Endothelial cell of umbilical vein (primary cell): ENCODE measurements at regions of chr11 and their contacts with region 1.

Region 1: DNA sequence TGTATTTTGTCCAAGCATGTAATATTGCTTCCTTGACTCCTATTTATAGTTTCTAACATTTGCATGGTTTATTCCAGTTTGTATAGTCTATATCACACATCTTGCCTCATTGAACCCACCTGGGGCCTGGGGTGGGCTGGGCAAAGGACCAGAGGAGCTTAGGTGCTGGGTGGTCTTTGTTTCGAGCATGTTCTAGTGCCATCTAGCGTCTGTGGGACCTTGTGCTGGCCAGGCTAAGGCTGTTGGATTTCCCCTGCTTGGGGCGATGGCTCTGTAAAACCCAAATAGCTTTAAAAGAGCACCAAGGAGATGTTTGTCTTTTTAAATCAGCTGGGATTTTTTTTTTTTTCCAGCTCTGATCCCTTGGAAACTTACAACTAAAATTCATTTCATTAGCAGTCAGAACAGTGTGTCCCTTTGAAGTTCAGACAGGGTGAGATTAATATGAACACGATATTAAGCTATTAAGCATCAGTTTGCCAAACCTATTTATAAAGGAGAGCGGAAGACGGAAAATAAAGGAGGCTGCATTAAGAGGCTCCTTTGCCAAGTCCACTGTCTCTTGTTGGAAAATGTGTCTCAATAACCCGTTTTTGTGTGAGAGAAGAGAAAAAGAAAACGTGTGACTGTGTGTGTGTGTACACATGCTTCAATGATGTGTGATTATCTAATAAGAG is 157.4 kb downstream of the COMMD9 start:
- DNase-seq: peak; percentile 71
- H3K4me3 ChIP-seq: no peak overlapping the region
- H3K27ac ChIP-seq: no peak overlapping the region
- H3K4me1 ChIP-seq: peaks cover 9% of the 10 kb centered on the region
- H3K27me3 ChIP-seq: no peaks in the 10 kb centered on the region
- CTCF ChIP-seq: peak; percentile 65 to 80
- POLR2A ChIP-seq: no peak

Region 2: DNA sequence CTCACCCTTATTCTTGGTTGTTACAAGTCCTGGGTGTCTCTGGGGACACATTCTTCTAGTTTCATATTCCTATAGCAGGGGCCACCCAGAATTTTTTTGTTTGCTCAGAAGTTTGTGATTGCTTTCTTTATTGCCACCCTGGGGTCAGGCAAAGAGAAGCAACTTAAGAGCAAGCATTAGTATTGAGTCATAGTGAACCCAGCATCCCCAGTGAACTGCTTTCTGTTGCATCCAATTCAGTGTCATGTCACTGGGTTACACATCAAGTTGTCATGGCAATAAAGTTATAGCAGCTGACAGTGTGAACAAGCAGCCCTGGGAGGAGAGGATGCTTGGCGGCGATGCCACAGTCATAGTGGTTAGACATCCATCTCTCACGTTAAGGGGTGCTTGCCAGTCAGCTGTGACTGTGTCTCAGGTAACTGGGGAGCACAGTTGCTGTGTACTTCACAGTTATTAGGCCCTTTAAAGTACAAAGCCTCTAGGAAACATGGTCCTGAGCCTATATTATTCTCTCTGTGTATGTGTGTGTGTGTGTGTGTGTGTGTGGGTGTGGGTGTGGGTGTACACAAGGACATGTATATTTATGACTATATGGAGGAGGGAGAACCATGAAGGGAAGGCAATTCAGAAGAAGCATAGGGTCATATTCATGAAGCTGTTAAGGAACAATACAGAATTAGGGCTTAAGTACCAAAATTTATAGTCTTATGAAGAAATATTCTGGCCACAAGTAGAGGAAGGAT is 416.8 kb before region 1 on chr11:
- CTCF ChIA-PET with region 1: interaction called, 3 read pairs
- POLR2A ChIA-PET with region 1: no interaction called
- dilution Hi-C with region 1: no loop called
- intact Hi-C with region 1: loop called (anchors 10 kb)
- DNase-seq: no peak
- H3K4me3 ChIP-seq: no peak overlapping the region
- H3K27ac ChIP-seq: no peak overlapping the region
- H3K4me1 ChIP-seq: no peaks in the 10 kb centered on the region
- H3K27me3 ChIP-seq: no peaks in the 10 kb centered on the region
- CTCF ChIP-seq: no peak
- POLR2A ChIP-seq: no peak

Region 3: GRCh38 chr11:36041988-36042611 is 89.8 kb before region 1 on chr11:
- CTCF ChIA-PET with region 1: interaction called, 49 read pairs
- POLR2A ChIA-PET with region 1: no interaction called
- dilution Hi-C with region 1: no loop called
- intact Hi-C with region 1: loop called (anchors 1 kb)
- DNase-seq: peak; percentile 29
- H3K4me3 ChIP-seq: no peak overlapping the region
- H3K27ac ChIP-seq: no peak overlapping the region
- H3K4me1 ChIP-seq: no peaks in the 10 kb centered on the region
- H3K27me3 ChIP-seq: no peaks in the 10 kb centered on the region
- CTCF ChIP-seq: peak; percentile 44 to 45
- POLR2A ChIP-seq: no peak

Region 4: DNA sequence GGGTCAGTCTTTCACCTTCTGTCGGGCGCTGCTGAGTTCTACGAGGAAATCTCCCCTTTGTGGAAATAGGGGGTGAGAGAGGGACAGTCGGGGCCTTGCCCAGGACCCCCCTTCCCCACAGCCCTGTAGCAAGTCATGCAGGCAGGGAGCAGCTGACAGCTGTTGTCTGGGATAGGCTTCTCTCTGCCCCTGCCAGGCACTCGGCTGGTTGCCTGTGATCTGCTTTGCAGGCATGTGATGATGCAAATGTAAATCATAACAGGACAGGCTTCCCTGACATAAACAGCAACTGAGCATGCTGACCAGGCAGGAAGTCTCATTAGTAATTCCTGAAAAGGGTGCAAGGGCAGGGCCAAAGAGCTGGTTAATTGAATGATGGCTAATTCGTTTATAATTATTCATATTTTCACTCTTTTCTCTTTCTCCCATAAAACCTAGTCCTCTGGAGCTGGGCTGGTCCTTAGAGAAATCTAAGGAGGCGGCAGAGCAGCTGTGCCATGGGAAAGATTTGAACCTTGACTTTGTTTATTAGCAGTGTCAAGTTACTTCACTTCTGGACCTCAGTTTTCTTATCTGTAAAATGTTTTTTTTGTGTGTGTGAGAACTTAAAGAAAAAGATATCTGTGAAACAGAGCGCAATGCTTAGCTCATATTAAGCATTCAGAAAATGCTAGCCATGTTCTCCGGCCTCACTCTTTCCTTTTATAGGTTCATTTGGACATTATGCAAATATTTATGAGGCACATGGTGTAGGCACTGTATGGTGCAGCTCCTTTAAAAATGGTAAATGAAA is 58.3 kb before region 1 on chr11:
- CTCF ChIA-PET with region 1: interaction called, 21 read pairs
- POLR2A ChIA-PET with region 1: no interaction called
- dilution Hi-C with region 1: no loop called
- intact Hi-C with region 1: no loop called
- DNase-seq: peak; percentile 90
- H3K4me3 ChIP-seq: no peak overlapping the region
- H3K27ac ChIP-seq: peak overlapping the region; percentile 62
- H3K4me1 ChIP-seq: peaks cover 32% of the 10 kb centered on the region
- H3K27me3 ChIP-seq: no peaks in the 10 kb centered on the region
- CTCF ChIP-seq: no peak
- POLR2A ChIP-seq: no peak

Region 5: DNA sequence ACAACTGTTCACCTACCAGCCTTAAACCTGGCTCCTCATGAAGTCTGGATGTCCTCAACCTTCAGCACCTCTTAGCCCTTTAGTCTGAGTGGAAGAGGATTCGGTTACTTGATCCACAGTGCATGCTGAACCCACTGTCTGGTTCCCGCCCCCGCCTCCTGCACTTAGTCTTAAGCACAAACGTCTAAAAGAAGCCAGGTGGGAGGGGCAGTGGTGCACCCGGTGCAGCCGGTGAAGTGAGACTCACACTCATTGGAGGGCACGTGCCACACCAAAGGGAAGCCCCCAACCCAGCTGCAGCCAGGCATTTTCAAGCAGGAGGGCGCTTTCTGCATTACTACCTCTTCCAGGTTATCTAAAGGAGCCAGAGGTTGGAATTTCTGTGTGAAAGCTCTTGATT is 10.6 kb after region 1 on chr11:
- CTCF ChIA-PET with region 1: interaction called, 13 read pairs
- POLR2A ChIA-PET with region 1: no interaction called
- dilution Hi-C with region 1: no loop called
- intact Hi-C with region 1: no loop called
- DNase-seq: no peak
- H3K4me3 ChIP-seq: no peak overlapping the region
- H3K27ac ChIP-seq: no peak overlapping the region
- H3K4me1 ChIP-seq: no peaks in the 10 kb centered on the region
- H3K27me3 ChIP-seq: no peaks in the 10 kb centered on the region
- CTCF ChIP-seq: no peak
- POLR2A ChIP-seq: no peak

Region 6: DNA sequence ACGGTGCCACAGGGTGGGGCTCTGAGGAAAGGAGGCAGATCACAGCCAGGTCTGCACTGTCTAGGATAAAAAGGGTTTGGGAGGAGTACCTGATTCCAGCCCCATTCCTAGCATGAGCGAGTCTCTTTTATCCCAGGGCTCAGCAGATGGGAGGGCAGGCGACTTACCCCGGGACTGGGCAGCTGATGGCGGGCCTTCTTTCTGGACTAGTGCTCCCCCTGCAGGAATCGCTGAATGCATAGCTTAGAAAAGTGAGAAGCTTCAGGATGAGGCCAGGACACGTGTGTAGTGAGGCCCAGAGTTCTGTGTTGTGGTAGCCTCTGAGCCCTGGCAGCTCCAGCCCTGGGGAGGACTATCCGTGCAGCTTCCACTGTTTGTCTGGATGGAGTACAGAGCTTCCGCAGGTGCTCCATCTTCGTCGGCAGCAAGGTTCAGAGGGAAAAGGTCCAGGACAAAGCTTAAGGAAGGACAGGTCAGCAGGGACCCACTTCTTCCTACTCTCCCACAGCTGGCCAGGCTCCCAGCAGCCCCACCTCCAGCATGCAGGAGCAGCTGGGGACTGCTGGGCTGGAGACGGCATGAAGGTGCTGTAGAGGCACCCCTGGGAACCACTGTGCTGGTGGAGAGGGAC is 127.0 kb after region 1 on chr11:
- CTCF ChIA-PET with region 1: interaction called, 87 read pairs
- POLR2A ChIA-PET with region 1: no interaction called
- dilution Hi-C with region 1: no loop called
- intact Hi-C with region 1: loop called (anchors 1 kb)
- DNase-seq: peak; percentile 69
- H3K4me3 ChIP-seq: no peak overlapping the region
- H3K27ac ChIP-seq: no peak overlapping the region
- H3K4me1 ChIP-seq: no peaks in the 10 kb centered on the region
- H3K27me3 ChIP-seq: peaks cover 0 to 2% of the 10 kb centered on the region in 2 experiments
- CTCF ChIP-seq: peak; percentile 80 to 86
- POLR2A ChIP-seq: no peak